ENCODE measurements at regions of chr2 and their contacts with region 1.

Region 1: GRCh38 chr2:43537137-43537536 is 58.7 kb downstream of the THADA start:
- DNase-seq: no peak
- H3K4me3 ChIP-seq: no peak overlapping the region
- H3K27ac ChIP-seq: no peak overlapping the region
- H3K4me1 ChIP-seq: peaks cover 3 to 34% (median 24%) of the 10 kb centered on the region in 4 donors
- H3K27me3 ChIP-seq: no peaks in the 10 kb centered on the region
- CTCF ChIP-seq: no peak
- EP300 ChIP-seq: no peak
- POLR2A ChIP-seq: no peak

Region 2: DNA sequence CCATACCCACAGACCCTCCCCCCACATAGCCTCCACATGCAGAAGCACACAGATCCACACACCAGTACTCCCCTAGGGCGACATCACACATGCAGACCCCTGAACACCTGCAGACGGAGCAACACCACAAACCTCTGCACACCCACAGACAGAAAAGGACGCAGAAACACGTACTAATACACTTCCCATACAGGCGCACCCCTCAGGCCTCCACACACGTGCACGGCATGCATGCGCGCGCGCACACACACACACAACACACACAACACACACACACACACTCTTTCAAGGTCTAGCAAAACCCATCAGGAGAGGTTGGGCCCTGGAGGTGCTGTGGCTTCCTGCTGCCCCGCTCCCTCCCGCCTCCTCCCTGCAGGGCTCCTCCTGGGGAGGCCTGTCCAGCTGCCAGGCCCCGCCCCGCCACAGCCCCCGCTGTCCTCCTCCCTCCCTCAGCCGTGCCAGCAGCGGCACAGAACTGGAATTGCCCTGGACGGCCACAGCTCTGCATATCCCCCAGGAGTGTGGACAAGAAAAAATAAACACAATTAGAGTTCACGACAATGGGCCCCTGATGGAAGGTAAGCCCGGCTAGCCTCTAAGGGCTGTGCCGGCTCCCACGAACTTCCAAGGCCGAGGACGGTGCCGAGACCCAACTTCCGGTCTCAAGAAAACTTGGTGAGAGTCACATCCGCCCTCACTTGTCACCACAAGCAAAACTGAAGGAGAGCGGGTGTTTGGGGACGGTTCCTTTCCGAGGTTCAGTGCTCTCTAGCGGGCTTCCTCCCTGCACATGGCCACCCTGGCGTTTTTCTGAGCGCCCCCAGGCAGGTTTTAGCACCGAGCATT is 317.5 kb before region 1 on chr2:
- intact Hi-C with region 1: loop called (anchors 5 kb)
- DNase-seq: peak; percentile 98
- H3K4me3 ChIP-seq: peak overlapping the region; percentile 80 to 93 (median 90)
- H3K27ac ChIP-seq: peak overlapping the region; percentile 97 to 100 (median 98)
- H3K4me1 ChIP-seq: peaks cover 56 to 79% (median 71%) of the 10 kb centered on the region in 4 donors
- H3K27me3 ChIP-seq: no peaks in the 10 kb centered on the region
- CTCF ChIP-seq: no peak
- EP300 ChIP-seq: no peak
- POLR2A ChIP-seq: no peak

Measured in esophagus muscularis mucosa (tissue), 4 donors.